ENCODE measurements at regions of chr3 and their contacts with region 1.

Region 1: GRCh38 chr3:145767909-145768308 is 393.1 kb downstream of the PLOD2 start:
- DNase-seq: peak; percentile 33
- H3K4me3 ChIP-seq: no peak overlapping the region
- H3K27ac ChIP-seq: no peak overlapping the region
- H3K4me1 ChIP-seq: peaks cover 9% of the 10 kb centered on the region
- H3K27me3 ChIP-seq: no peaks in the 10 kb centered on the region
- CTCF ChIP-seq: peak; percentile 63

Region 2: GRCh38 chr3:143895805-143896204 is 1872.1 kb before region 1 on chr3:
- CTCF ChIA-PET with region 1: no interaction called
- POLR2A ChIA-PET with region 1: no interaction called
- intact Hi-C with region 1: loop called (anchors 10 kb)
- DNase-seq: peak; percentile 30
- H3K4me3 ChIP-seq: no peak overlapping the region
- H3K27ac ChIP-seq: no peak overlapping the region
- H3K4me1 ChIP-seq: no peaks in the 10 kb centered on the region
- H3K27me3 ChIP-seq: no peaks in the 10 kb centered on the region
- CTCF ChIP-seq: peak; percentile 44

Region 3: GRCh38 chr3:145639875-145640274 is 128.0 kb before region 1 on chr3:
- CTCF ChIA-PET with region 1: no interaction called
- POLR2A ChIA-PET with region 1: no interaction called
- intact Hi-C with region 1: no loop called
- DNase-seq: no peak
- H3K4me3 ChIP-seq: no peak overlapping the region
- H3K27ac ChIP-seq: no peak overlapping the region
- H3K4me1 ChIP-seq: no peaks in the 10 kb centered on the region
- H3K27me3 ChIP-seq: no peaks in the 10 kb centered on the region
- CTCF ChIP-seq: no peak

Region 4: DNA sequence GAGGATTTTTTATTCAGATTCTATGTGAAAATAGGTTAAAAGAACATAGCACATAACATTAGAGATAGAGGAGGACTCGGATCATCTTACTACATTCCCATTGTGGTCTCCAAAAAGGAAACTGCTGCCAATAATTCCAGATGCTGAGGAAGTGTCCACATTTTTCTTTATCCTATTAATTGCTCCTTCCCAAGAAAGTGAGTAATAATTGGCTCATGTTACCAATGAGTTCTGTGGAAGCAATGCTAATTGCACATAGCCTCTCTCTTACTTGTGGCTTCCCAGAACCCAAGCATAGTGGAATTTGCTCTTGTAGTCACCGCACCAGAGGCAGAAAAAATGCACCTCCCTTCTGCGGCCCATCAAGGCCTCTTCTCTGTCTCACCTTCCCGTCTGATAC is 184.6 kb after region 1 on chr3:
- CTCF ChIA-PET with region 1: no interaction called
- POLR2A ChIA-PET with region 1: no interaction called
- intact Hi-C with region 1: no loop called
- DNase-seq: no peak
- H3K4me3 ChIP-seq: no peak overlapping the region
- H3K27ac ChIP-seq: no peak overlapping the region
- H3K4me1 ChIP-seq: no peaks in the 10 kb centered on the region
- H3K27me3 ChIP-seq: no peaks in the 10 kb centered on the region
- CTCF ChIP-seq: no peak